ENCODE measurements at regions of chr1 and their contacts with region 1.

Region 1: DNA sequence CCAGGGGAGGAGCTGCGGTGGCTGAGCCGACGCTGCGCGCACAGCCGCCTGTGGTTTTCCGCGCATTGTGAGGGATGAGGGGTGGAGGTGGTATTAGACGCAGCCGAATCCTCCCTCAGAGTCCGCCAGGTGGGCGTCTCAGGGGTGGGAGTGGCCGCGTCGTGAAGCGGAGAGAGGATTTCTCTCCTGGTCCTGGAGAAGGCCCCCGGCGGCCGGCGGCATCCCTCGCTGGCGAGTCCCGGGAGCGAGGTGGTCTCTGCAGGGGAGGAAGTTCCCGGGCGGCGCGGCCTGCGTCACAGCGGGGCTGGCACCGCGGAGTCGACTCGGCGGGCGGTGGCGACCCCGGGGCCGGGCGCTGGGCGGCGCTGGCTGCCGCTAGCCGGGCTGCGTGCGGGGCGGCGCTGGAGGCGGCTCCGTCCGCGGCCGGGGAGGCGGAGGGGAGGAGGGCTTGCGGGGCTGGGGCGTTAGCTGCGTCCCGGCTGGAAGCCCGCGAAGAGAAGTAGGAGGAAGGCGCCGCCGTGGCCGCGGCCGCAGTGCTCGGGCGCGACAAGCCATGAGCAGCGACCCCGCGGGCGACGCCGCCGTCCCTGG is at the start of gene LRRC8C:
- DNase-seq: peak; percentile 78 to 98 (median 85)

Region 2: GRCh38 chr1:89524369-89525168 is 108.2 kb before region 1 on chr1 and contains the start of gene LRRC8B:
- intact Hi-C with region 1: loop called (anchors 1 kb)
- DNase-seq: peak; percentile 89 to 99 (median 92)

Region 3: DNA sequence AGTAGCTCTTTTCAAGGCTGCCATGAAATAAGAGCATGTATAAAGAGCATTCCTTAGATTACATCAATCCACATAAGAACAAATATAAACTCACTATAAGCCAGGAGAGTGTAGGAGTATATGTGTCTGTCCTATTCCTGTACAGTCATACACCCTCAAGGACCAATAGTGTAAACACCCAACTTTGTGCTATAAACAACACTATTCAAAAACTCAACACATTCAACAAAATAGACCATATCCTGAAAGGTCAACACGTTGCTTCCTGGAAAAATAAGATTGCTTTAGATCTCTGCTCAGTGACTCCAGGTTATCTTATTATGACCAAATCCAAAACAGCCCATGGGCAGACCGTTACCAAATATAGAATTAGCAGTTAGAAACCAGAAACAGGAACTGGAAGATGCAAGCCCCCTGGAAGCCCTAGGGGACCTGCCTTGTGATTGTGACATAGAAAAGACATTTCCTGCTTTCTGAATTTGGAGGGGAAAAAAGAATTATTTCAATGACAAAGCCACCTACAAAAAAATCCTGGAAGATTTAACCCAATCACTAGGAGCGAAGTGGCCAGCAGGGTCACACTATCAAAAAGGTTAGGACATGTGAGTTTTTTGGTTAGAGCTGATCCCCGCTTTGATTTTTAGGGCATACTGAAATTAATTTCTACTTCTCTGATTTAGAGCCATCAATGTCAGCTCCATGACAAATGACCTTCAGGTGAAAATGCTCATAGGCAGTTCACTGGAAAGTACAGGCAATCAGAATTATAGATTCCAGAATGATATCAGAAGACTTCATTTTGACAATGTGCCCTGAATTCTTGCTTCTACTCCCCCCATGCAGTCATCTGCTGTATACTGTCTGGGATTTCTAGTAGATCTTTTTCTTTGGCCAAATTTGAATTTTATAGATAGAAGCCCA is 60.1 kb after region 1 on chr1:
- intact Hi-C with region 1: loop called (anchors 10 kb)
- DNase-seq: no peak

Region 4: DNA sequence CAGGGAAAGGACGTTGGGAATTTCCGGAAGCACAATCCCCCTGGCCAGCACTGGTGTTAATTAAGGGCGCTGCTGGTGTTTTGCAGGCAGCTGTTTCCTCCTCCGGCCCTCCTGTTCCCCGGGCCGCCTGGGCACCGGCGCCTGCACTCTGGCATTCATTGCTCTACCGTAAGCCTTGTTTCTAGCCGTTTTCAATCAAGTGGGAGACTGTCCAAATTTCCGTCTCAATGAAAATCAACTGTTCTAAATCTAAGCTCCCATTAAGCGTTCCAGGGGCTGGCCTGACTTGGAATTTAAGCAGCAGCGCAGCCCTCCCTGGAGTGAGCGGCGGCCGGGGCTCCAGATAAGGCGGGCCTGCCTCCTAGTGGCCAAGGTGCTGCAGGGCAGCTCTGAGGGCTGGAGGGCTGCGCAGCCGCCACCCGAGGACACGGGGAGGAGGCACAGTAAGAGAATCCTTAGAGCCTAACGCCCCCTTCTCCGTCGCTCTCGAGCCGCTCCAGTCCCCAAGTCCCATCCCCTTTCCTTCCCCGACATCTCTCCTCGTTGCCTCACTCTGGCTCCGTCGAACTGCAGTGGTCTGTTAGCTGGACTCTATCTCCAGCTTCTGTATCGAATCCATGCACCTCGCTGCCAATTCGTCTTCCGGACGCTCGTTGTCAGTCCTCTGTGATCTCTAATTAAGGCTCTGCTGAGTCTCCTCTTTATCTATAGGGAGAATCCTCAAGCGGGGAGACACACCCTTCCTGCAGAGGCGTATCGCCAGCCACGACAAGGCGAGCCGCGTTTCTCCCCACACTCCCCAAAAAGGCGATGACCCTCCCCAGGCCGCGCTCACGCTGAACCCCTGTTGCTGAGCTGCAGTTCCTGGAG is 130.3 kb after region 1 on chr1:
- intact Hi-C with region 1: loop called (anchors 1 kb)
- DNase-seq: peak; percentile 82 to 98 (median 88)

Measured in posterior cingulate gyrus (tissue), 11 donors.